ENCODE measurements at regions of chr22 and their contacts with region 1.

Region 1: DNA sequence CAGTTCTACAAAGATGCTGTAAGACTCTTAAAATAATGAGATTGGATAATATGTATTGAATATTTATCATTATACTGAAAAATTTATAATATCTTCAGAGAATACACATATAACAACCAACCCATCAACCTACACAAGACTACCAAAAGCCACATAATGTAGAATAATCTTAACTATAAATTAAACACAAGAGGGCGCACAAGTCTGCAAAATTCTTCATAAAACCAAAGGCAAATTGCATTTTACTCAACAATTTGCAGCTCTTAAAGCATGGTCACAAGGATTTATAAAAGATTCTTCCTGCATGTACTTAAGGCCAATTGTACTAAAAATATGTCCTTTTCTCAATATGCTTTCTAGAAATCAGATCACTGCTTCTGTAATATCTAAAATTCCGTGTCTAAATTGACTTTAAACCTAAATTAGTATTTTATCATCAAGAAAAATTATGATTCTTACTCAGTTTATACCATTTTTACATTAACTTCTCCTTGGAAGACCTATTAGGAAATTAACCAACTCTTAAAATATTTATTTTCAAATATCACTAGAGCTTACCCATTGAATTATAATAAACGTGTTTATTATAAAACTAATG is 79.0 kb downstream of the TTC28 start:
- DNase-seq: no peak
- ATAC-seq: no peak
- H3K4me3 ChIP-seq: no peak overlapping the region
- H3K27ac ChIP-seq: no peak overlapping the region
- H3K4me1 ChIP-seq: no peaks in the 10 kb centered on the region
- H3K27me3 ChIP-seq: no peaks in the 10 kb centered on the region
- CTCF ChIP-seq: peak in 4 of 5 experiments; percentile 48 to 60 (median 57)
- POLR2A ChIP-seq: no peak

Region 2: GRCh38 chr22:28341001-28341400 is 259.6 kb before region 1 on chr22:
- in situ Hi-C with region 1: no loop called
- intact Hi-C with region 1: no loop called
- DNase-seq: no peak
- ATAC-seq: no peak
- H3K4me3 ChIP-seq: no peak overlapping the region
- H3K27ac ChIP-seq: no peak overlapping the region
- H3K4me1 ChIP-seq: peaks cover 19 to 29% of the 10 kb centered on the region in 2 donors
- H3K27me3 ChIP-seq: no peaks in the 10 kb centered on the region
- CTCF ChIP-seq: no peak
- POLR2A ChIP-seq: no peak

Region 3: DNA sequence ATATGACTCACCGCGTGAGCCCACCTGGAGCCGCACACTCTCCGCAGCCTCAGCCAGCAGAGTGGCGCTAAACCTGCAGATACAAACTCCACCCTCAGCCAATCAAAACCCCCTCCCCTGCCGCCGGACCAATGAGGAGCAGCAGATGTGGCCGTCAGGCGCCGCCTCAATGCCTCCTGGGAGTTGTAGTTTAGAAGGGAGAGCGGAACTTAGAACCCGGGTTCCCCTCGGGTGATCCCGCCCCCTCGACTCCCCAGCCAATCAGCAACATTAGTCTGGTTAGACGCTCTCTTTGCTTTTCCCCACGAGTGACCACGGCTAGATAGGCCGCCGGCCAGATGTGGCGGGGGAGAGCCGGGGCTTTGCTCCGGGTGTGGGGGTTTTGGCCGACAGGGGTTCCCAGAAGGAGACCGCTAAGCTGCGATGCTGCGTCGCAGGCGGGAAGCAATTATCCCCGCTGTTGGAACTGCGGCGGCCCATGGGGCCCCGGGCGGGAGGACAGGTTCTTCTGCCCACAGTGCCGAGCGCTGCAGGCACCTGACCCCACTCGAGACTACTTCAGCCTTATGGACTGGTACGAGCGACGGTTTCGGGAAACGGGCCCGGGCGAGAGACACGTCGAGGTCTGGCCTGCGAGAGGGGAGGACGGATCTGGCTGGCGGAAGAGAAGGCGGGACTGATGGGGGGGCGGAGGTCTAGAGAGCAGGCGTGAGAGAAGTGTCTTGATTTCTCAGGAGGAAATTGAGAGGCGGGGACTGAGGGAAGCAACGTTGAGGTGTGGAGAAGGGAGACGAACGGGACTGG is 141.3 kb after region 1 on chr22 and contains the starts of genes CHEK2 and HSCB:
- in situ Hi-C with region 1: loop called in 1 of 4 experiments (anchors 10 kb)
- intact Hi-C with region 1: loop called (anchors 10 kb)
- DNase-seq: peak; percentile 98
- ATAC-seq: peak; percentile 99
- H3K4me3 ChIP-seq: peak within 1 kb of the TSS; percentile 62 to 98 (median 82)
- H3K27ac ChIP-seq: peak within 1 kb of the TSS; percentile 90 to 99 (median 94)
- H3K4me1 ChIP-seq: peaks cover 12 to 13% of the 10 kb centered on the region in 2 donors
- H3K27me3 ChIP-seq: no peaks in the 10 kb centered on the region
- CTCF ChIP-seq: peak in 1 of 5 experiments; percentile 15
- POLR2A ChIP-seq: peak; percentile 64 to 75
- total RNA-seq, gene CHEK2: 0.58 to 5.7 (median 3.7) TPM
- total RNA-seq, gene HSCB: 14.4 to 30.4 (median 22.9) TPM

Region 4: GRCh38 chr22:28829358-28830181 is 228.9 kb after region 1 on chr22:
- in situ Hi-C with region 1: loop called (anchors 5 kb)
- intact Hi-C with region 1: loop called (anchors 1 kb)
- DNase-seq: peak; percentile 44 to 59
- ATAC-seq: peak; percentile 79 to 86
- H3K4me3 ChIP-seq: no peak overlapping the region
- H3K27ac ChIP-seq: no peak overlapping the region
- H3K4me1 ChIP-seq: no peaks in the 10 kb centered on the region
- H3K27me3 ChIP-seq: no peaks in the 10 kb centered on the region
- CTCF ChIP-seq: peak; percentile 92 to 98 (median 98)
- POLR2A ChIP-seq: no peak

Region 5: GRCh38 chr22:29031227-29032011 is 430.8 kb after region 1 on chr22:
- in situ Hi-C with region 1: loop called (anchors 25 kb)
- intact Hi-C with region 1: loop called (anchors 10 kb)
- DNase-seq: peak; percentile 34 to 67
- ATAC-seq: peak; percentile 90 to 93
- H3K4me3 ChIP-seq: peak overlapping the region; percentile 51 to 70 (median 58)
- H3K27ac ChIP-seq: peak overlapping the region; percentile 69 to 83 (median 80)
- H3K4me1 ChIP-seq: peaks cover 19 to 23% of the 10 kb centered on the region in 2 donors
- H3K27me3 ChIP-seq: no peaks in the 10 kb centered on the region
- CTCF ChIP-seq: peak in 1 of 5 experiments; percentile 19
- POLR2A ChIP-seq: no peak

Region 6: DNA sequence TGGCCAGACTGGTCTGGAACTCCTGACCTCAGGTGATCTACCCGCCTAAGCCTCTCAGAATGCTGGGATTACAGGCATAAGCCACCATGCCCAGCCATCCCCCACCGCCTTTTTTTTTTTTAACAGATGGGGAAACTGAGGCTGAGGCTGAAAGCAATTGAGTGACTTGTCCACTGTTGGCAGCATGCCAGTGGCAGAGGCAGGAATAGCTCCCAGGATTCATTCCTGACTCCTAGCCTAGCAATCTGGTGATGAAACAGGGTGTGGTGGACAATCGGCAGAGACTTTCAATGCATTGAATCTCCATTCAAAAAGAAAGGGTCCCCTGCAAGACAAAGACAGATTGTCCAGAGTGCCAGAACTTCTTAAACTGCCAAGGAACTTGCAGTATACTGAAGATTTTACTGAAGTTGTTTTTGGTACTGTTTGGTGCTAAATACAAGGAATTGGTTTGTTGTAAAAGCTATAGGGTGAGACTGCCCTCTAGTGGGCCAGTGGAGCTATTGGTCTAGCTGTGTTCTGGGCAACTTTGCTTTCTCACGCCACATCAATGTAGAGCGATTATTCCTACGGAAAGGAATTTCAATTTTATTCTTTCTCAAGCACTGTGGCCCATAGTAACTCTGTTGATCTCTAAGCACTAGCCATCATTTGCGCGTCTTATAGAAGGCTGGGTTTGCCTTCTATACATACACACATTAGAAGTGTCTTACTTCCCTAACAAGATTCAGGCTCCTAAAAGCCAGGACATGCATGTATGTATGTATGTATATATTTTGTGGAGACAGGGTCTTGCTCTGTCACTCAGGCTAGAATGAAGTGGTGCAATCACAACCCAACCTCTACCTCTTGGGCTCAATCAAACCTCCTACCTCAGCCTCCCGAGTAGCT is 440.0 kb after region 1 on chr22:
- in situ Hi-C with region 1: loop called (anchors 25 kb)
- intact Hi-C with region 1: loop called (anchors 10 kb)
- DNase-seq: peak; percentile 41 to 44
- ATAC-seq: peak; percentile 53 to 82
- H3K4me3 ChIP-seq: no peak overlapping the region
- H3K27ac ChIP-seq: no peak overlapping the region
- H3K4me1 ChIP-seq: peaks cover 0 to 10% of the 10 kb centered on the region in 2 donors
- H3K27me3 ChIP-seq: no peaks in the 10 kb centered on the region
- CTCF ChIP-seq: peak; percentile 93 to 98 (median 95)
- POLR2A ChIP-seq: no peak

Measured in gastrocnemius medialis (tissue), 4 donors.